Mucosa of descending colon (tissue), 3 donors: ENCODE measurements at regions of chr15 and their contacts with region 1.

Region 1: GRCh38 chr15:67839929-67840748 is at the start of gene RNU6-1:
- DNase-seq: peak; percentile 96 to 97 (median 97)
- ATAC-seq: peak; percentile 94
- H3K4me3 ChIP-seq: peak within 1 kb of the TSS; percentile 53
- H3K4me1 ChIP-seq: peaks cover 29% of the 10 kb centered on the region
- CTCF ChIP-seq: no peak
- total RNA-seq, gene RNU6-1: not detected

Region 2: GRCh38 chr15:67456677-67457529 is 383.2 kb before region 1 on chr15:
- intact Hi-C with region 1: loop called (anchors 5 kb)
- DNase-seq: peak; percentile 74 to 94 (median 87)
- ATAC-seq: peak; percentile 93
- H3K4me3 ChIP-seq: no peak overlapping the region
- H3K4me1 ChIP-seq: no peaks in the 10 kb centered on the region
- CTCF ChIP-seq: peak; percentile 79

Region 3: DNA sequence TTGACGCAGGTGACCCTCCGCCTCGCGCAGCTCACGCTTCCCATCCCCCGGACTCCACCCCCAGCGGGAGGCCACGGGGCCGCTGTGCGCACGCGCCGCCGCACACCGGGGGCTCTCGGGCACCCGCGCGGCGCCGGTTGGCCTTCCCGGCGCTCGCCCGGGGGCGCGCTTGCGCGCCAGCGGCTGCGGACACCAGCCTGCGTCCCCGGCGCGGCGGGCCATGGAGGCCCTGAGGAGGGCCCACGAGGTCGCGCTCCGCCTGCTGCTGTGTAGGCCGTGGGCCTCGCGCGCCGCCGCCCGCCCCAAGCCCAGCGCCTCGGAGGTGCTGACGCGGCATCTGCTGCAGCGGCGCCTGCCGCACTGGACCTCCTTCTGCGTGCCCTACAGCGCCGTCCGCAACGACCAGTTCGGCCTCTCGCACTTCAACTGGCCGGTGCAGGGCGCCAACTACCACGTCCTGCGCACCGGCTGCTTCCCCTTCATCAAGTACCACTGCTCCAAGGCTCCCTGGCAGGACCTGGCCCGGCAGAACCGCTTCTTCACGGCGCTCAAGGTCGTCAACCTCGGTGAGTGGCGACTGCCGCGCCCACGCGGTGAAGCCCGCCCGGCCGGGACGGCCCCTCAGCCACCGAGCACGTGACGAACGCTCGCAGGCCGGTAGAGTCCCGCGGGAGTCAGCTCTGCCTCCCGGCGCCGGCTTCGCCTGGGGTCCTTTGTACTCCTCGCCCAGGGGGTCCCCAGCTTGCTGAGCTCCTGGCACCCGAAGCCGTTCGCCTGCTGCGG is 318.9 kb before region 1 on chr15 and contains the start of gene C15orf61:
- intact Hi-C with region 1: loop called in 1 of 2 experiments (anchors 5 kb)
- DNase-seq: peak; percentile 89 to 96 (median 94)
- ATAC-seq: peak; percentile 95
- H3K4me3 ChIP-seq: peak within 1 kb of the TSS; percentile 64
- H3K4me1 ChIP-seq: peaks cover 5% of the 10 kb centered on the region
- CTCF ChIP-seq: no peak
- total RNA-seq, gene C15orf61: 5.4 to 6.2 (median 6.0) TPM